T-cell (primary cell): ENCODE measurements at regions of chr3 and their contacts with region 1.

Region 1: DNA sequence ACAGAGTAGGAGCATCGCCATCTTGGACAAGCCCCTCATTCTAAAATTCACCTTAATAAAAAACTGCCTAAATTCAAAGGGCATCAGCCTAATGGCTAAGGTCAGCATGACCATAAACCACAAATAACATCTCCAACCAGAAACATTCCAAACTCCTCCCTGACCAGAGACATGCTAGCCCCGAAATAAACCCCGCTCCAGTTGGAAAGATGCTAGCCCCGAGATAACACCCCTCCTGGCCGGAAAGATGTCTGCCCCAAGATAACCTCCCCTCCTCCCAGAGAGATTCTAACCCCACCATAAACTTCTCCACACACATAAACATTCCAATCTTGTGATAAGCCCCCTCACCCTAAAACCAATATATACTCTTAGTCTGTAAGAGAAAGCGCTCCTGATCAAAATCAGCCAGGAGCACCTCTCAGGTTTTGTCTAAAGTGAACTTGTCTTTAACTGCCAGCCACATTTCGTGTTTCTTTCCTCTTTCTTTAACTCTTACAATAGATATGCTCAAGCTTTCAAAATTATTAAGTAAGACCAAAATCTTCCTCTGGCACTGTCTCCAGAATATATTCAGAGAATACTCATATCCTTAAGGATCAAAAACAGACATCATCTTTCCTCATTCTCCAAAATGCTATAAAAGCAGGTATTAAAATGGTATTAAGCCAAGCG is 104.1 kb downstream of the GSK3B start:
- DNase-seq: no peak
- ATAC-seq: no peak
- H3K4me3 ChIP-seq: no peak overlapping the region
- H3K4me3 Mint-ChIP-seq: no peak overlapping the region
- H3K27ac ChIP-seq: no peak overlapping the region
- H3K27ac Mint-ChIP-seq: no peak overlapping the region
- H3K4me1 ChIP-seq: peaks cover 0 to 8% of the 10 kb centered on the region in 2 experiments
- H3K4me1 Mint-ChIP-seq: peaks cover 38 to 52% (median 45%) of the 10 kb centered on the region in 3 donors
- H3K27me3 ChIP-seq: no peaks in the 10 kb centered on the region
- H3K27me3 Mint-ChIP-seq: no peaks in the 10 kb centered on the region

Region 2: DNA sequence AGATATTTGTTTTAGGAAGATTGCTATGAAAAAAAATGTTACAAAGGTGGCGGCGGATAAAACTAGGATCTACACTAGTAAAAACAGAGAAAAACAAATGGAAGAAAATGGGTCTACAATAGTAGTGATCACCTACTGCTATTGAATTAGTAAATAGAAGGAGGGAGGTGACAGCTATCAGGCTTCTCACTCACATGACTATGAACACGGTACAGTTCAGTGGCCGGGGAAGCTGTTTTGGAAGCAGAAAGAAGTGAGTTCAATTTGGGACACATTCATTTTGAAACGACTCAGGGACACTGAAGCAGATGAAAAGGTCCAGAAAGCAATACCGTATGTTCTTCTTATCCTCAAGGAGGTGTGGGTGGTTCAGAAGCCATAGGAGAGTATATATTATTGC is 34.1 kb before region 1 on chr3:
- CTCF ChIA-PET with region 1: interaction called in 1 of 2 experiments, 11 read pairs
- POLR2A ChIA-PET with region 1: no interaction called
- DNase-seq: no peak
- ATAC-seq: no peak
- H3K4me3 ChIP-seq: no peak overlapping the region
- H3K4me3 Mint-ChIP-seq: no peak overlapping the region
- H3K27ac ChIP-seq: no peak overlapping the region
- H3K27ac Mint-ChIP-seq: no peak overlapping the region
- H3K4me1 ChIP-seq: no peaks in the 10 kb centered on the region
- H3K4me1 Mint-ChIP-seq: peaks cover 54 to 61% (median 58%) of the 10 kb centered on the region in 3 donors
- H3K27me3 ChIP-seq: no peaks in the 10 kb centered on the region
- H3K27me3 Mint-ChIP-seq: no peaks in the 10 kb centered on the region